RWPE1 (cell line): ENCODE measurements at regions of chr4 and their contacts with region 1.

Region 1: GRCh38 chr4:172390341-172390740 is 577.1 kb downstream of the GALNTL6 start:
- DNase-seq: peak; percentile 48
- H3K27ac ChIP-seq: no peak overlapping the region
- CTCF ChIP-seq: no peak

Region 2: DNA sequence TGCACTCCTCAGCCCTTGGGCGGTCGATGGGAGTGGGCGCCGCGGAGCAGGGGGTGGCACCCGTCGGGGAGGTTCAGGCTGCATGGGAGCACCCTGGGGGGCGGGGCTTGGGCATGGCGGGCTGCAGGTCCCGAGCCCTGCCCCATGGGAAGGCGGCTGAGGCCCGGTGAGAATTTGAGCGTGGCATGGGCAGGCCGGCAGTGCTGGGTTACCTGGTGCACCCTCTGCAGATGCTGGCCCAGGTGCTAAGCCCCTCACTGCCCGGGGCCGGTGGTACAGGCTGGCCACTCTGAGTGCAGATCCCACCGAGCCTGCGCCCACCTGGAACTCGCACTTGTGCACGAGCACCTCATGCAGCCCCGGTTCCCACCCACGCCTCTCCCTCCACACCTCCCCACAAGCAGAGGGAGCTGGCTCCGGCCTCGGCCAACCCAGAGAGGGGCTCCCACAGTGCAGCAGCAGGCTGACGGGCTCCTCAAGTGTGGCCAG is 20.8 kb before region 1 on chr4:
- CTCF ChIA-PET with region 1: interaction called, 11 read pairs
- POLR2A ChIA-PET with region 1: no interaction called
- DNase-seq: no peak
- H3K27ac ChIP-seq: no peak overlapping the region
- CTCF ChIP-seq: no peak

Region 3: DNA sequence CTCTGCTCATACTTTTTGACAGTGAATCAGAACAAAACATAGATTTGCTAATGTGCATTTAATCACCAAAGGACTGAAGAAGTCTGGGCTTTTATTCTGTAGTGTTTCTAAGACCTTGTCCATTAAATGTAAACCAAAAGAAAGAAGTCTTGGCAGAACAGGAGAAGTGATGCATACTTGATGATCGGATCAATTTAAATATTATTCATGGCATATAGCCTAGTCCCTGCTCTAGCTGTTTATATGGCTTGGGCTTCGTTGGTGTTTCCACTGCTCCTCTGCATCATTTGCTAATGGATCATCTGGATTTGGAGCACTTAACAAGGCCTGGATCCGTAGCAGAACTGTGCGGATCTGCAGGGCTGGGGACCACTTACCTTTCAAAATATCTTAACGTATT is 10.5 kb before region 1 on chr4:
- CTCF ChIA-PET with region 1: no interaction called
- POLR2A ChIA-PET with region 1: no interaction called
- DNase-seq: no peak
- H3K27ac ChIP-seq: no peak overlapping the region
- CTCF ChIP-seq: no peak

Region 4: GRCh38 chr4:172547730-172548129 is 157.4 kb after region 1 on chr4:
- CTCF ChIA-PET with region 1: no interaction called
- POLR2A ChIA-PET with region 1: no interaction called
- DNase-seq: no peak
- H3K27ac ChIP-seq: no peak overlapping the region
- CTCF ChIP-seq: no peak